CD8-positive, alpha-beta T cell (primary cell): ENCODE measurements at regions of chr6 and their contacts with region 1.

Region 1: GRCh38 chr6:27902335-27903314 is 9.6 kb downstream of the OR2B2 start:
- DNase-seq: peak; percentile 83 to 95 (median 91)
- ATAC-seq: peak; percentile 80
- H3K4me3 ChIP-seq: peak overlapping the region; percentile 61
- H3K4me3 Mint-ChIP-seq: peak overlapping the region; percentile 88
- H3K27ac ChIP-seq: peak overlapping the region; percentile 69 to 89
- H3K27ac Mint-ChIP-seq: peak overlapping the region; percentile 97
- H3K4me1 ChIP-seq: peaks cover 4% of the 10 kb centered on the region
- H3K4me1 Mint-ChIP-seq: peaks cover 5% of the 10 kb centered on the region
- H3K27me3 ChIP-seq: no peaks in the 10 kb centered on the region
- H3K27me3 Mint-ChIP-seq: peaks cover 8% of the 10 kb centered on the region
- CTCF ChIP-seq: no peak

Region 2: GRCh38 chr6:27177485-27178406 is 724.9 kb before region 1 on chr6:
- CTCF ChIA-PET with region 1: interaction called, 5 read pairs
- POLR2A ChIA-PET with region 1: no interaction called
- intact Hi-C with region 1: loop called (anchors 2 kb)
- DNase-seq: peak; percentile 46 to 89 (median 72)
- ATAC-seq: peak; percentile 69
- H3K4me3 ChIP-seq: peak overlapping the region; percentile 95 to 100
- H3K4me3 Mint-ChIP-seq: peak overlapping the region; percentile 93
- H3K27ac ChIP-seq: peak overlapping the region; percentile 48 to 68
- H3K27ac Mint-ChIP-seq: peak overlapping the region; percentile 91
- H3K4me1 ChIP-seq: no peaks in the 10 kb centered on the region
- H3K4me1 Mint-ChIP-seq: peaks cover 17% of the 10 kb centered on the region
- H3K27me3 ChIP-seq: no peaks in the 10 kb centered on the region
- H3K27me3 Mint-ChIP-seq: peaks cover 3% of the 10 kb centered on the region
- CTCF ChIP-seq: peak; percentile 11

Region 3: GRCh38 chr6:27503436-27504030 is 399.1 kb before region 1 on chr6:
- CTCF ChIA-PET with region 1: no interaction called
- POLR2A ChIA-PET with region 1: no interaction called
- intact Hi-C with region 1: loop called (anchors 1 to 5 kb)
- DNase-seq: peak; percentile 58 to 90 (median 79)
- ATAC-seq: peak; percentile 62
- H3K4me3 ChIP-seq: peak overlapping the region; percentile 61 to 70
- H3K4me3 Mint-ChIP-seq: peak overlapping the region; percentile 94
- H3K27ac ChIP-seq: peak overlapping the region; percentile 34 to 46
- H3K27ac Mint-ChIP-seq: peak overlapping the region; percentile 90
- H3K4me1 ChIP-seq: peaks cover 11% of the 10 kb centered on the region
- H3K4me1 Mint-ChIP-seq: peaks cover 38% of the 10 kb centered on the region
- H3K27me3 ChIP-seq: peaks cover 0 to 7% of the 10 kb centered on the region in 2 experiments
- H3K27me3 Mint-ChIP-seq: peaks cover 4% of the 10 kb centered on the region
- CTCF ChIP-seq: no peak

Region 4: GRCh38 chr6:28080631-28081485 is 178.2 kb after region 1 on chr6:
- CTCF ChIA-PET with region 1: no interaction called
- POLR2A ChIA-PET with region 1: no interaction called
- intact Hi-C with region 1: loop called in 1 of 2 experiments (anchors 1 kb)
- DNase-seq: peak; percentile 86 to 96 (median 94)
- ATAC-seq: peak; percentile 74
- H3K4me3 ChIP-seq: peak overlapping the region; percentile 69 to 93
- H3K4me3 Mint-ChIP-seq: peak overlapping the region; percentile 98
- H3K27ac ChIP-seq: peak overlapping the region; percentile 91 to 96
- H3K27ac Mint-ChIP-seq: peak overlapping the region; percentile 99
- H3K4me1 ChIP-seq: peaks cover 13% of the 10 kb centered on the region
- H3K4me1 Mint-ChIP-seq: peaks cover 21% of the 10 kb centered on the region
- H3K27me3 ChIP-seq: no peaks in the 10 kb centered on the region
- H3K27me3 Mint-ChIP-seq: no peaks in the 10 kb centered on the region
- CTCF ChIP-seq: no peak

Region 5: GRCh38 chr6:28266962-28267694 is 364.5 kb after region 1 on chr6 and contains the start of gene ZSCAN26:
- CTCF ChIA-PET with region 1: interaction called, 3 read pairs
- POLR2A ChIA-PET with region 1: no interaction called
- intact Hi-C with region 1: loop called in 1 of 2 experiments (anchors 10 kb)
- DNase-seq: peak; percentile 76 to 93 (median 88)
- ATAC-seq: peak; percentile 95
- H3K4me3 ChIP-seq: peak within 1 kb of the TSS; percentile 92 to 97
- H3K4me3 Mint-ChIP-seq: no peak within 1 kb of the TSS
- H3K27ac ChIP-seq: peak within 1 kb of the TSS; percentile 77 to 87
- H3K27ac Mint-ChIP-seq: no peak within 1 kb of the TSS
- H3K4me1 ChIP-seq: peaks cover 21% of the 10 kb centered on the region
- H3K4me1 Mint-ChIP-seq: peaks cover 31% of the 10 kb centered on the region
- H3K27me3 ChIP-seq: no peaks in the 10 kb centered on the region
- H3K27me3 Mint-ChIP-seq: no peaks in the 10 kb centered on the region
- CTCF ChIP-seq: no peak
- total RNA-seq, gene ZSCAN26: 11.1 to 14.7 TPM

Region 6: GRCh38 chr6:28355743-28356665 is 453.4 kb after region 1 on chr6:
- CTCF ChIA-PET with region 1: interaction called, 3 read pairs
- POLR2A ChIA-PET with region 1: no interaction called
- intact Hi-C with region 1: loop called (anchors 2 to 5 kb)
- DNase-seq: peak in 8 of 9 experiments; percentile 32 to 85 (median 62)
- ATAC-seq: peak; percentile 91
- H3K4me3 ChIP-seq: peak overlapping the region; percentile 39 to 65
- H3K4me3 Mint-ChIP-seq: peak overlapping the region; percentile 90
- H3K27ac ChIP-seq: peak overlapping the region in 1 of 2 experiments; percentile 27
- H3K27ac Mint-ChIP-seq: peak overlapping the region; percentile 52
- H3K4me1 ChIP-seq: peaks cover 17% of the 10 kb centered on the region
- H3K4me1 Mint-ChIP-seq: peaks cover 33% of the 10 kb centered on the region
- H3K27me3 ChIP-seq: no peaks in the 10 kb centered on the region
- H3K27me3 Mint-ChIP-seq: no peaks in the 10 kb centered on the region
- CTCF ChIP-seq: peak; percentile 83